Panc1 (cell line): ENCODE measurements at regions of chr3 and their contacts with region 1.

Region 1: DNA sequence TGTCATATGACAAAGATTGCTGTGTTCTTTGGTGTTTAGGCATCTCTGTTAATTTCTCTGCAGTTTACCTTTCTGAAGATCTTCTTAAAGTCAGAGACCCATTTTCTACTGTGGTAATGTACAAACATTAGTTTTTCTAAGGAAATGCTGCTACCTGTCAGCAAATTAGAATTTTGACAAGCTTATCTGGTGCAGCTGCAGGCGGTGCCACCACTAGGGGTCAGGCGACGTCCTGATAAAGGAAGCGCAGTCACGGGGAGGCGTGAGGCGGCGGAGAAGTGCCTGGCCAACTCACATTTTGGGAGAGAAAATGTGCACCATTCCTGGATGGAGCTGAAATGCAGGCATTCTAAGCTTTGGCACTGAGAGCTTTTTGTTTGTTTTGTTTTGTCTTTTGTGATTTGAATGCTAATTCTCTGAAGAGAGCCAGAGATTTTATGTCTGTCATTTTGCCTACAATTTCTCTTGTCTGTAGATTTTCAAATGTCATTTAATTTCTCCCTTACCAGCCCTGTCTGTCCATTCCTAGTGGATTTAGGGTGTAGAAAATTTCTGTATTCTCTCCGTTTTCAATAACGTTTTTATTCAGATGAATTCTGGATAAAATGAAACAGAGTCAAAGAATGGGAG is 24.9 kb upstream of the SIAH2 start:
- DNase-seq: no peak
- ATAC-seq: peak; percentile 93
- H3K4me3 ChIP-seq: no peak overlapping the region
- H3K27ac ChIP-seq: no peak overlapping the region
- H3K4me1 ChIP-seq: no peaks in the 10 kb centered on the region
- H3K27me3 ChIP-seq: peaks cover 11% of the 10 kb centered on the region; the same call in 1 of the 2 replicates
- CTCF ChIP-seq: peak; percentile 97

Region 2: DNA sequence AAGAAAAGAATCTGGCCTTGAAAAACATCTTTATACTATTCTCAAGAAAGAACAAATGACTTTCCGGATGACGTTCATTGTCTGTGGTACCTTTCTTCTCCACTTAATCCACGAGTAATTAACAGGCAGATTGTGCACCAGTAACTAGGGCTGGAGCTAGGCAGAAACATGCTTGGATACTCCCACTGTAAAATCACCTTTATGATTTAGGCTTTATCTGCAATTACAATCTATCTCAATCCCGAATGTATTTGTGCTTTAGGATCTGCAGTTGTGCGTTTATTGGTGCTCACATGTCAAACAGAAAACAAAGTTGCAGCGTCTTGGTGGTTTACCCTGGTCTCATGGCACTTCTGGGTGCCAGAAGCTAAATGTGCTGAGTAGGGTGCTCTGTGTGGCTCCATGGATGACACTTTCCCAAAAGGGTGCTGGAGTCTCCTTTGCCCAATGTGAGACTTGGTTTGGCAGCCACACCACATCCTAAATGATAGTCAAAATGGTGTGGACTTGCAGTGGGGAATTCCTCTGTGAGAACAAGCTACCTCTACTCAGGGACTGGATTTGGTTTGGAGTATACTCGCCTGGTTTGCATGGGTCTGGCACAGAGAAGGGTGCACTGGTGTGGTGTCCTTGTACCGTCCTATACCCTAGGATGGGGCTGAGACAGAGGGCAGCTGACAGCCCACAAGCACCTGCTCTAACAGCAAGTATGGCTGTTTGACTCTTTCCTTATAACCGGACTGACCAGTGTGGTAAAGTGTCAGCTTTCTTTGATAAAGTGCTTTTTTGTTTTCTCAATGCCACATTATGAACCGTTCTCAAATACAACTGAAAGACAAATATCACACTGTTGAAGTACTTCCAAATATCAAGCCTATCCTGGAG is 249.3 kb before region 1 on chr3:
- CTCF ChIA-PET with region 1: no interaction called
- POLR2A ChIA-PET with region 1: no interaction called
- in situ Hi-C with region 1: no loop called
- intact Hi-C with region 1: no loop called
- DNase-seq: no peak
- ATAC-seq: peak; percentile 60
- H3K4me3 ChIP-seq: no peak overlapping the region
- H3K27ac ChIP-seq: no peak overlapping the region
- H3K4me1 ChIP-seq: peaks cover 8% of the 10 kb centered on the region
- H3K27me3 ChIP-seq: no peaks in the 10 kb centered on the region
- CTCF ChIP-seq: no peak

Region 3: GRCh38 chr3:150806185-150806835 is 18.5 kb after region 1 on chr3:
- CTCF ChIA-PET with region 1: no interaction called
- POLR2A ChIA-PET with region 1: no interaction called
- in situ Hi-C with region 1: no loop called
- intact Hi-C with region 1: no loop called
- DNase-seq: no peak
- ATAC-seq: no peak
- H3K4me3 ChIP-seq: no peak overlapping the region
- H3K27ac ChIP-seq: no peak overlapping the region
- H3K4me1 ChIP-seq: no peaks in the 10 kb centered on the region
- H3K27me3 ChIP-seq: peaks cover 45% of the 10 kb centered on the region
- CTCF ChIP-seq: no peak

Region 4: DNA sequence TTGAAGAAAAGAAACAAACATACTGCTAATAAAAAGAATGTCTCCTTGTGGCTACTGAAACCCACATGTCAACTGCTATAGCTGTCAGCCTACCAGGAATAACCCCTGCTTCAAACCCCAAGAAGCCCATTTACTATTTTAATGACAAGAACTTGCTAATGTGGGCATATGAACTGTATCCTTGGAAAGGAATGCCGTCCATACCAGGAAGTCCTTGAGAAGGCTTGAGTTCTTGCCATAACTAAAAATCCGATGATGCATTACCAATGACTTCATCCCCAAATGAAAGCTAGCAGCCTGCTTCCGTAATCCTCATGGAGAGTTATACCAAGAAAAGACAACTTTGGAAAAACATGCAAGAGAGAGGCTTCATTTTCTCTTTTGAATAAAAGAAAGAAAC is 82.5 kb after region 1 on chr3:
- CTCF ChIA-PET with region 1: no interaction called
- POLR2A ChIA-PET with region 1: no interaction called
- in situ Hi-C with region 1: no loop called
- intact Hi-C with region 1: loop called (anchors 2 kb)
- DNase-seq: no peak
- ATAC-seq: no peak
- H3K4me3 ChIP-seq: no peak overlapping the region
- H3K27ac ChIP-seq: no peak overlapping the region
- H3K4me1 ChIP-seq: no peaks in the 10 kb centered on the region
- H3K27me3 ChIP-seq: peaks cover 7% of the 10 kb centered on the region; the same call in 1 of the 2 replicates
- CTCF ChIP-seq: no peak